GM12878 (cell line): ENCODE measurements at regions of chr12 and their contacts with region 1.

Region 1: GRCh38 chr12:57213058-57213715 is 3.4 kb upstream of the NXPH4 start:
- DNase-seq: peak; percentile 27
- ATAC-seq: peak; percentile 79
- H3K4me3 ChIP-seq: no peak overlapping the region
- H3K27ac ChIP-seq: no peak overlapping the region
- H3K4me1 ChIP-seq: peaks cover 13% of the 10 kb centered on the region
- H3K27me3 ChIP-seq: peaks cover 16 to 20% of the 10 kb centered on the region in 2 experiments
- CTCF ChIP-seq: peak; percentile 94 to 97 (median 97)
- EP300 ChIP-seq: no peak
- POLR2A ChIP-seq: no peak
- RAD21 ChIP-seq: peak; percentile 84

Region 2: GRCh38 chr12:57223191-57224165 is 10.3 kb after region 1 on chr12:
- CTCF ChIA-PET with region 1: interaction called, 124 read pairs
- POLR2A ChIA-PET with region 1: interaction called, 5 read pairs
- RAD21 ChIA-PET with region 1: interaction called, 28 read pairs
- SMC1A ChIA-PET with region 1: interaction called, 9 read pairs
- in situ Hi-C with region 1: no loop called
- intact Hi-C with region 1: no loop called
- DNase-seq: no peak
- ATAC-seq: peak; percentile 23
- H3K4me3 ChIP-seq: no peak overlapping the region
- H3K27ac ChIP-seq: no peak overlapping the region
- H3K4me1 ChIP-seq: peaks cover 13% of the 10 kb centered on the region
- H3K27me3 ChIP-seq: peaks cover 17 to 29% of the 10 kb centered on the region in 2 experiments; a peak in 3 of 4 replicates
- CTCF ChIP-seq: no peak
- EP300 ChIP-seq: no peak
- POLR2A ChIP-seq: no peak
- RAD21 ChIP-seq: no peak

Region 3: GRCh38 chr12:57229634-57230380 is 16.6 kb after region 1 on chr12 and contains the start of gene SHMT2:
- CTCF ChIA-PET with region 1: interaction called, 124 read pairs
- POLR2A ChIA-PET with region 1: interaction called, 5 read pairs
- RAD21 ChIA-PET with region 1: interaction called, 28 read pairs
- SMC1A ChIA-PET with region 1: interaction called, 36 read pairs
- in situ Hi-C with region 1: no loop called
- intact Hi-C with region 1: no loop called
- DNase-seq: peak; percentile 93
- ATAC-seq: peak; percentile 79
- H3K4me3 ChIP-seq: peak within 1 kb of the TSS; percentile 79
- H3K27ac ChIP-seq: peak within 1 kb of the TSS; percentile 93
- H3K4me1 ChIP-seq: peaks cover 31% of the 10 kb centered on the region
- H3K27me3 ChIP-seq: peaks cover 2 to 4% of the 10 kb centered on the region in 2 experiments; a peak in 3 of 4 replicates
- CTCF ChIP-seq: no peak
- EP300 ChIP-seq: no peak
- POLR2A ChIP-seq: peak; percentile 82
- RAD21 ChIP-seq: no peak
- polyA plus RNA-seq, gene SHMT2: 57.0 to 65.6 TPM

Region 4: GRCh38 chr12:57238854-57239554 is 25.8 kb after region 1 on chr12:
- CTCF ChIA-PET with region 1: interaction called, 271 read pairs
- POLR2A ChIA-PET with region 1: interaction called, 12 read pairs
- RAD21 ChIA-PET with region 1: interaction called, 35 read pairs
- SMC1A ChIA-PET with region 1: interaction called, 55 read pairs
- in situ Hi-C with region 1: no loop called
- intact Hi-C with region 1: loop called (anchors 1 kb)
- DNase-seq: no peak
- ATAC-seq: peak; percentile 72
- H3K4me3 ChIP-seq: peak overlapping the region; percentile 68
- H3K27ac ChIP-seq: no peak overlapping the region
- H3K4me1 ChIP-seq: peaks cover 47% of the 10 kb centered on the region
- H3K27me3 ChIP-seq: peaks cover 5 to 8% of the 10 kb centered on the region in 2 experiments; a peak in 3 of 4 replicates
- CTCF ChIP-seq: peak; percentile 100; a peak in 5 of 6 replicates
- EP300 ChIP-seq: no peak
- POLR2A ChIP-seq: peak; percentile 66; the same call in 1 of the 2 replicates
- RAD21 ChIP-seq: peak; percentile 88

Region 5: DNA sequence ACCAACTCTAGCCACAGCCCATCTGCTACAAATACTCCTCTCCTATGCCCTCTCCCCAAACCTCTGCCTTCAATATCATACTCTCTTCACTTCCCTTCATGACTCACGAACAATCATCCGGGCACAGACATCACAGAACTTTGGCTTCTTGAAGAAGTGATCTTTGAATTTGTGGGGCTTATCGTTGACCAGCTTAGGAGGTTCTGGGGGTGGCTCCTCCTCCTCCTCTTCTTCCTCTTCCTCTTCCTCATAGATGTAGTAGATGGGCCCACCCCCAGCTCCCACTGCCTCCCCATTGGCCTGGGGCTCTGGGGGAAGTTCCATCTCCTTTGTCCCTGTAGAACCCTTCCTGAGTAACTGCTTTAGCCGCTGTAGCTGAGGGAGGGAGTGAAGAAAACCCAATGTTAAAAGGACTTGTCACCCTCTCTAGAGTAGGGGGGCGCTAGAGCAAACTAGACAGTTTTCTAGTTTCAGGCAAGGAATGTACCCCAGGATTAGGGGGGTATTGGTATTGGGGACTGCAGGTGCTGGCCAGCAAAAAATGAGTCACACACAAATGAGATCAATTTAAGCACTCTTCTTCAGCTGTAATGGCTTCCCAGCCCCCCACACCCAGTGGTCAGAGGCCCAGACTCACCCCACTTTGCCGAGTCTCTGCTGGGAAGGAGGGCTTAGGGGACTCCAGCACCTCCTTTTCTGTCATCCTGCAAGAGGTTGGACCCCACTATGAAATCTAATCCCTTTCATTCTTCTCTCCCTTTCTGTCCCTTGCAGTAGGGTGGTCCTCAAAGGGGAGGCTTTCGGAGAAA is 36.0 kb after region 1 on chr12:
- CTCF ChIA-PET with region 1: interaction called, 271 read pairs
- POLR2A ChIA-PET with region 1: interaction called, 4 read pairs
- RAD21 ChIA-PET with region 1: interaction called, 7 read pairs
- SMC1A ChIA-PET with region 1: interaction called, 55 read pairs
- in situ Hi-C with region 1: loop called (anchors 5 kb)
- intact Hi-C with region 1: no loop called
- DNase-seq: no peak
- ATAC-seq: peak; percentile 95
- H3K4me3 ChIP-seq: peak overlapping the region; percentile 41; the same call in 1 of the 2 replicates
- H3K27ac ChIP-seq: no peak overlapping the region
- H3K4me1 ChIP-seq: peaks cover 1% of the 10 kb centered on the region; the same call in 1 of the 2 replicates
- H3K27me3 ChIP-seq: no peaks in the 10 kb centered on the region
- CTCF ChIP-seq: no peak
- EP300 ChIP-seq: no peak
- POLR2A ChIP-seq: no peak
- RAD21 ChIP-seq: no peak

Region 6: DNA sequence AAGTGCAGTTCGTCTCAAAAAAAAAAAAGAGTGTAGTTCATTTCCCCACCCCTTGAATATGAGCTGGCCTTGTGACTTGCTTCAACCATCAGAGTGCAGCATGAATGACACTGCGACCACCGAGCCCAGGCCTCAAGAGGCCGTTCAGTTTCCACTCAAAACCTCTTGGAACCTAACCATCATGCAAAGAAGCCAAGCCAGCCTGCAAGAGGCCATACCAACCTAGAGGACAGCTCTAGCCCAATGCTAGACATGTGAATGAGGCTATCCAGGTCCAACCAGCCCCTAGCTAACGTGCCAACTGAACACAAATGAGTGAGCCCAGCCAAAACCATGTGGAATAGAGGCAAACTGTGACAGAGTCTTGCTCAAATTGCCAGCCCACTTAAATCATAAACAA is 188.0 kb after region 1 on chr12:
- CTCF ChIA-PET with region 1: no interaction called
- POLR2A ChIA-PET with region 1: no interaction called
- RAD21 ChIA-PET with region 1: no interaction called
- SMC1A ChIA-PET with region 1: no interaction called
- in situ Hi-C with region 1: no loop called
- intact Hi-C with region 1: no loop called
- DNase-seq: no peak
- ATAC-seq: no peak
- H3K4me3 ChIP-seq: no peak overlapping the region
- H3K27ac ChIP-seq: no peak overlapping the region
- H3K4me1 ChIP-seq: no peaks in the 10 kb centered on the region
- H3K27me3 ChIP-seq: no peaks in the 10 kb centered on the region
- CTCF ChIP-seq: no peak
- EP300 ChIP-seq: no peak
- POLR2A ChIP-seq: no peak
- RAD21 ChIP-seq: no peak